CD8-positive, alpha-beta T cell (primary cell): ENCODE measurements at regions of chr17 and their contacts with region 1.

Region 1: GRCh38 chr17:76176701-76177574 is 35.9 kb upstream of the FOXJ1 start:
- DNase-seq: no peak
- ATAC-seq: no peak
- H3K4me3 ChIP-seq: no peak overlapping the region
- H3K4me3 Mint-ChIP-seq: no peak overlapping the region
- H3K27ac ChIP-seq: peak overlapping the region; percentile 4 to 58
- H3K27ac Mint-ChIP-seq: peak overlapping the region; percentile 95
- H3K4me1 ChIP-seq: peaks cover 59% of the 10 kb centered on the region
- H3K4me1 Mint-ChIP-seq: peaks cover 62% of the 10 kb centered on the region
- H3K27me3 ChIP-seq: no peaks in the 10 kb centered on the region
- H3K27me3 Mint-ChIP-seq: no peaks in the 10 kb centered on the region
- CTCF ChIP-seq: no peak

Region 2: GRCh38 chr17:76141212-76142038 is 35.5 kb before region 1 on chr17 and contains the start of gene FOXJ1:
- CTCF ChIA-PET with region 1: interaction called, 76 read pairs
- POLR2A ChIA-PET with region 1: interaction called, 57 read pairs
- intact Hi-C with region 1: loop called (anchors 1 kb)
- DNase-seq: peak; percentile 86 to 96 (median 91)
- ATAC-seq: peak; percentile 55
- H3K4me3 ChIP-seq: peak within 1 kb of the TSS; percentile 54 to 67
- H3K4me3 Mint-ChIP-seq: peak within 1 kb of the TSS; percentile 88
- H3K27ac ChIP-seq: peak within 1 kb of the TSS; percentile 45 to 59
- H3K27ac Mint-ChIP-seq: peak within 1 kb of the TSS; percentile 88
- H3K4me1 ChIP-seq: peaks cover 74% of the 10 kb centered on the region
- H3K4me1 Mint-ChIP-seq: peaks cover 65% of the 10 kb centered on the region
- H3K27me3 ChIP-seq: peaks cover 0 to 8% of the 10 kb centered on the region in 2 experiments
- H3K27me3 Mint-ChIP-seq: no peaks in the 10 kb centered on the region
- CTCF ChIP-seq: no peak
- total RNA-seq, gene FOXJ1: 2.2 to 2.7 TPM